ENCODE measurements at regions of chr1 and their contacts with region 1.

Region 1: DNA sequence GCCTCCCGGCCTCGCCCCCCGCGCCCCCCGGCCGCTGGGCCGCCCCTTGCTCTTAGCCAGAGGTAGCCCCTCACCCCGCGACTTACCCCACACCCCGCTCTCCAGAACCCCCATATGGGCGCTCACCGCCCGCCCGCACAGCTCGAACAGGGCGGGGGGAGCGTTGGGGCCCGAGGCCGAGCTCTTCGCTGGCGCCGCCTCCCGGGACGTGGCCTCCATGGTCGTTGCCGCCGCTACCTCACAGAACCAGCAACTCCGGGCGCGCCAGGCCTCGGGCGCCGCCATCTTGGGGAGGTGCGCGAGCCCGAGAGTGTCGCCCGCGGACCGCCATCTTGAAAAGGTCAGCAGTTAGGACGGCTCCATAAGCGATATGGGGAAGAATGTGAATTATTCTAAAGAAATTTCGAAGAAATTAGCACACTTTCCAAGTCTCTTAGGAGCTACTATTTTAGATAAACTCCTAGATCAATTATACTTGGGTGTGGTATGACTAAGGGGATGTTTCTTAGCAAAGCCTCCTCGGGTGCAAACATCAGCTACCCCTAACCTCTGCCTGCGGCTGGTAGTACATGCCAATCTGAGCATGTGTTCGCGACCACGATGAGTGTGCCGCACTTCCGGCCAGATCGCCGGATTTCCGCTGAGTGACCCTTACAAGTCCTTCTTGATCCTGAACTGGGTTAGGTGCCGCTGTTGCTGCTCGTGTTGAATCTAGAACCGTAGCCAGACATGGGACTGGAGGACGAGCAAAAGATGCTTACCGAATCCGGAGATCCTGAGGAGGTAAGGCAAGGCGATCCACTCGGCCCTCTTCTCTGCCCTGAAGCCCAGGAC is at the starts of genes LRRC41 and UQCRH:
- DNase-seq: peak; percentile 92 to 99 (median 96)

Region 2: DNA sequence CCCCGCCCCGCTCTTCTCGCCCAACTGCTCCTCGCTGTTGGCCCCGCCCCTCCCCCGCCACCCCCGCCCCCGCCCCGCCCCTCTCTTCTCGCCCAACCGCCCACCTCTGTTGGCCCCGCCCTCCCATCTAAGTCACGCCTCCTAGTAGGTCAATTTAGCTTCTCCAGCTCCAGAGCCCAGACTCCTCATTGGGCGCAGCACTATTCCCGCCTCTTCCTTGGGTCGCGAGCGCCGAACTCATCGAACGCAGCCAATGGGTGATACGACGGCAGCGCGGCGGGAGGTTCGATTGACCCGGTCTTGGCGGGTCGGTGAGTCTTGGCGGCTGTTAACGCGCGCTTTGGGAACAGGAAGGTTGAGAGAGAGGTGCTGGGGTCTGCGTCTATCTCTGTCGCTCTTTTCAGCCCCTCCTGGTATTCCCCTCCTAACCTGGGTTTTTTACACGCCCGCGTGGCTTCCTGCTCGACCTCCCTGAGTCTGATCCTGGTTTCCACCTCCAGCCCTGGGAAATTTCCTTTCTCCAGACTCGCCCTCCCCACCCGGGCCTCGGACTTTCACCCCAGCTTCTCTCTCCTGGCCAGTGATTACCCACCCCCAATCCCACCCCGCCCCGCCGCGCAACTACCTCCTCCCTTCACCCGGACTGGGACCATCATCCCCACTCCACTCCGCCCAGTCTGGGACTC is 55.7 kb before region 1 on chr1 and contains the start of gene RAD54L:
- intact Hi-C with region 1: loop called (anchors 2 kb)
- DNase-seq: peak; percentile 94 to 99 (median 96)

Region 3: DNA sequence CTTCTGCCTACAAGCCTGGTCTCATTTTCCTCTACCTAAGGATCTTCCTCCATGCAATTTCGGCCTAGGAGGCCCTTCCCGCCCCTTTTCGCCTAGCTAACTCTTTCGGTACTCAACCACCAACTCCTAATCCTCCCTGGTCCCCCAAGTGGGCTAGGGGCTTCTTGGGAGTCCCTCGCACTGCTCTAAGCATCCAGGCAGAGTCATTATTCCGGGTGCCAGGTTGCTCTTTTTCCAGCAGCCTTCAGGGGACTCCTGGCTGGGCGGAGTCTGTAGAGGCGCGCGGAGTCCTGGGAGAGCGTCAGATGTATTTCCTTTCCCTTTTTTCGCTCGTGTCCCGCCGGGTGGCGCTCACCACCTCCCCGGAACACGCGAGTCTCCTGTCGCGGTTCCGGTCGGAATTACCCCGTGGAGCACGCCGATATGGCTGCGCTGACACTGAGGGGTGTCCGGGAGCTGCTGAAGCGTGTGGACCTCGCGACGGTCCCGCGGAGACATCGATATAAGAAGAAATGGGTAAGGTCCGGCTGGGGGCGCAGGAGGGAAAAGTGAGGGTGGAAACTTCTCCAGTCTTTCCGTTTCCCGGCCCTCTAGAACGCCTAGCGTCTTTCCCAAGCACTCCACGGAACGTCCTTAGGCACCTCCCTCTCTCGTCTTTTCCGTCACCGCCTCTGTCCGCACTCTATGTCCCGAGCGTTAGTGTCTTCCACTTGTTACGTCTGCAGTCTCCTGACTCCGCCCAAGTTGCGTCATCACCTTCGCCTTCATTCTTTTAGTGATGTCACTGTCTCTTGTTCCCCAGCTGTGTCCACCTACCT is 37.4 kb after region 1 on chr1 and contains the start of gene NSUN4:
- intact Hi-C with region 1: loop called (anchors 2 kb)
- DNase-seq: peak; percentile 84 to 99 (median 92)

Measured in posterior cingulate gyrus (tissue), 11 donors.